ENCODE measurements at regions of chr13 and their contacts with region 1.

Region 1: DNA sequence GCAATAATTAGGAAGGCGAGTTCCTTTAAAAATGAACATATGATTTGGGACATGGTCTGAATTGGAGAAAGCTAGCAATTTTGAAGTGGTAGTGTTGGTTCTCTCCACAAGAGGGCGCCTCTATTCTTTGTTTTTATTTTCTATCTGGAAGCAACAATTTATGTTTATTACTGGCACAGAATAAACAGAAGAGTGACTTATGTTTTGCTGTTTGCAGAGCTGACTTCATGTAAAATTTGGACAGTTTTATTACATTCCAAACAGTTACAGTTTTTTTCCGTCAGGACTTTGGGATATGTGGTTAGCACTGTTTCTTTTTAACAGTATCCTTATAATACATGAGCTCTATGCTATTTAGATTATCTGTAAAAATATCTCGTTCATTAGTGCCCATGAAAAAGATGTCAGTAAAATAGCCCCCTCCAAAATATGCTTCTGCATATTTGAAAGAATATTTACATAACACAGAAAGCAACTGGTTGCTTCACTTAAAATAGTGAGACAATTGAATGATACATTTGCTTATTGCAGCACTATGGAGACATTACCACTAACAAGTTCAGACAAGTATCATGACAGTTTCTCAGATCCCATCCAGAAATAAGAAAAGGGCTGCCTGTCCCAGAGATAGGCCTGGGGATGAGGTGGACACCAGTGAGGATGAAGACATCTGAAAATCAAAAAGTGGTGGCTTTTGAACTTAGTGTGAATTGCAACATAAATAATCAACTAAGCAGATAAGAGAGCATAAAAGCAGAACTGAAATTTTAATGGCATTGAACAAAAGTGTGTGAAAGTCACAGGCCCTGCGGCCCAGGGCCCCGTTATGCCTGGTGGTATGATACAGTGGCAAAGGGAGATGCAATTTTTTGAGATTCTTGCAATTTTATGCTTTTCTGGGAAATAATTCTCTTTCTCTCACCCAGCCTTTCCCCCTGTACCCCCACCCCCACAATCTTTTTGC is 32.3 kb upstream of the FGF9 start:
- DNase-seq: peak; percentile 35
- H3K4me3 ChIP-seq: no peak overlapping the region
- H3K27ac ChIP-seq: no peak overlapping the region
- H3K4me1 ChIP-seq: no peaks in the 10 kb centered on the region
- H3K27me3 ChIP-seq: peaks cover 7% of the 10 kb centered on the region
- CTCF ChIP-seq: peak; percentile 86

Region 2: DNA sequence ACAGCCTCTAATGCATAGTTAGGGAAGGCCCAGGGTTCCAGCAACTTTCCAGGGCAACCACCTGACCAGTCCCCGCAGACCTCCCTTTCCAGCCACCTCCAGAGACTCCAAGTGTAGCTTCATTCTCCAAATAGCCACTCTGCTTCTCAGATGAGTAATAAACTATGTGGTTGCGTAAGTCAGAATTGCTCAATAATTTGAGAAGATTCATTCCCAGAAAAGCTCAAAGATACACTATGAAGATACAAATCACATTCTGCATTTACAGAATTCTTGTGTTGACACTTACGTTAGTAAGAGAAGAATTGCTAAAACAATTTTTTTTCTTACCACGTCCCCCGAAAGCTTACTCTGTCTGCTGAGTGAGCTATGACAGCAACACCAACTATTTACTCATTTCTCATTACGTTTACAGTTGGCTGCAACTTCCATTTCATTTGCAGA is 569.0 kb before region 1 on chr13:
- CTCF ChIA-PET with region 1: no interaction called
- POLR2A ChIA-PET with region 1: interaction called, 11 read pairs
- intact Hi-C with region 1: no loop called
- DNase-seq: peak; percentile 71
- H3K4me3 ChIP-seq: no peak overlapping the region
- H3K27ac ChIP-seq: peak overlapping the region; percentile 55
- H3K4me1 ChIP-seq: peaks cover 9% of the 10 kb centered on the region
- H3K27me3 ChIP-seq: no peaks in the 10 kb centered on the region
- CTCF ChIP-seq: no peak

Region 3: GRCh38 chr13:21297914-21298831 is 340.4 kb before region 1 on chr13:
- CTCF ChIA-PET with region 1: no interaction called
- POLR2A ChIA-PET with region 1: no interaction called
- intact Hi-C with region 1: no loop called
- DNase-seq: peak; percentile 95
- H3K4me3 ChIP-seq: peak overlapping the region; percentile 86
- H3K27ac ChIP-seq: peak overlapping the region; percentile 70
- H3K4me1 ChIP-seq: peaks cover 25% of the 10 kb centered on the region
- H3K27me3 ChIP-seq: no peaks in the 10 kb centered on the region
- CTCF ChIP-seq: peak; percentile 92

Region 4: DNA sequence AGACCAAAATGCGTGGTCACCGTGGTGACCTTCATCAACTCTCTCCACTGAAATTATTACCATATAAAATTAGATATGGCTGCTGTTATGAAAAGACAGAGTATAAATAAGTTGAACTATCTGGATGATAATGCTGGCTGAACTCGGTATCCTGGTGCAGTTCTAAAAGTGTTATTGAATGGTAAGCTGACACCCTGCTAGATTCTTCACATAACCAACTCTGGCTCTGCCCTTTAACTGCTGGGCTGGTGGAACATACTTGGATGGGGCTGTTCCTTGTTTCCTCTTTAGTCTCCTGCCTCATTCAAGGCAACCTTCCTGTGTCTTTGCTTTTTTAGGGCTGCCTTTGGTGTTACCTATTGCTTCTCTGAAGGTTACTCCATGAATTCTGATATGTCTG is 139.2 kb after region 1 on chr13:
- CTCF ChIA-PET with region 1: no interaction called
- POLR2A ChIA-PET with region 1: no interaction called
- intact Hi-C with region 1: loop called (anchors 10 kb)
- DNase-seq: no peak
- H3K4me3 ChIP-seq: no peak overlapping the region
- H3K27ac ChIP-seq: no peak overlapping the region
- H3K4me1 ChIP-seq: no peaks in the 10 kb centered on the region
- H3K27me3 ChIP-seq: no peaks in the 10 kb centered on the region
- CTCF ChIP-seq: no peak

Region 5: GRCh38 chr13:22278336-22278929 is 639.8 kb after region 1 on chr13:
- CTCF ChIA-PET with region 1: no interaction called
- POLR2A ChIA-PET with region 1: no interaction called
- intact Hi-C with region 1: loop called (anchors 5 kb)
- DNase-seq: peak; percentile 56
- H3K4me3 ChIP-seq: no peak overlapping the region
- H3K27ac ChIP-seq: no peak overlapping the region
- H3K4me1 ChIP-seq: no peaks in the 10 kb centered on the region
- H3K27me3 ChIP-seq: peaks cover 3% of the 10 kb centered on the region
- CTCF ChIP-seq: peak; percentile 56

Region 6: DNA sequence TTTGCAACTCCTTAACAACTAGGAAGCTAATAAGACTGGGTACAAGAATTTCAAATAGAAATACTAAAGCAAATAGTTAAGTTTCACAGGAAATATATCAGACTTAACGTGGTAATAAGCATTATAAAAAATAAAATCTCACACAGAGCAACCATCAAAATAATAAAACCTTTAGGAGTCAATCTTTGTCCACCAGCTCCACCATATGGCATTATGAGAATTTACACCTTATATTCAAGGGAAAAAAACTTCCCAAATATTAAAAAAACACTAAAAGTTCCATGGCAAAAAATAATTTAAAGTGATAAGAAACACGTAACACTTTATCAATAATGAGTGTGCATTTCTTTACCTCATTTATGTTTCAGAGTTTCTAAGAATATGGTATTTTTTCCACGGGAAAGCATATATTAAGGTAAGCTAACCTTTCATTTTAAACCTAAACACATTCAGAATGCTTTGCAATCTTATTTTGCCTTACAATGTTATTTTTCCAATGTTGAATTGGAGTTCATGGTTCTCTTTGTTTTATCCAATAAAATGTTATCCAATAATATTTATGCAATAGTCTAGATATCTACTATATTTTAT is 1119.0 kb after region 1 on chr13:
- CTCF ChIA-PET with region 1: no interaction called
- POLR2A ChIA-PET with region 1: no interaction called
- intact Hi-C with region 1: loop called (anchors 2 kb)
- DNase-seq: no peak
- H3K4me3 ChIP-seq: no peak overlapping the region
- H3K27ac ChIP-seq: no peak overlapping the region
- H3K4me1 ChIP-seq: no peaks in the 10 kb centered on the region
- H3K27me3 ChIP-seq: no peaks in the 10 kb centered on the region
- CTCF ChIP-seq: peak; percentile 59